K562 (cell line): ENCODE measurements at regions of chr17 and their contacts with region 1.

Region 1: DNA sequence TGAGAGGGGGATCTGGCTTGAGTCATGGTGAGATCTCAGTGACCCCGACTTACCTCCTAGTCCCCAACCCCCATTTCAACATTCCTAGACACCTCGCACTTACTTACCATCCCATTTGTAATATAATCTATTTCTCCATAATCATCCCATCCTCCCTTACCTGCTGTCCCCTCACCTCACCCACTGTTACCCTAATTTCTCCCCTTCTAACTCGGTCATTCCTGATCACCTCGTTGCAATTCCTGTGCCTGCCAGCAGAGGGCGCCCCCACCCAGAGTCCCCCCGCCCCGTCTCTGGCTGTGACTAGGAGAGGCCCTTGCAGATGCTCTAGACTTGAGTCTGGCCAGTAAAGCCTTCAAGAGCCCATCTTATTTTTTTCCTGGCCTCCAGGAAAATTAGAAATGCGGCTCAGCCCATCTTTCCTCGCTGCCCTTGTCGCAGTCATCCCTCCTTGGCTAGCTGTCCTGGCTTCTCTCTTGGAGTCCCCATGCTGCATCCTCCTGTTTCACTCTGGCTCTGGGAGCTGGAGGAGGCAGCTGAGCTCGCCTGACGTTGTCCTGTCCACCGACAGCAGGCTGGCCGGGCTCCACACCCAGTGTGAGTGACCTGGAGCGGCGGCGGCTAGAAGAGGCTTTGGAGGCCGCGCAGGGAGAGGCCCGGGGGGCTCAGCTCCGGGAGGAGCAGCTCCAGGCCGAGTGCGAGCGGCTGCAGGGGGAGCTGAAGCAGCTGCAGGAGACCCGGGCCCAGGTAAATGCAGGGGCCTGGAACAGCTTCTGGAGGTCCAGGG is 5.0 kb downstream of the TBKBP1 start:
- DNase-seq: peak; percentile 75 to 90 (median 86)
- ATAC-seq: peak; percentile 64
- H3K4me3 ChIP-seq: no peak overlapping the region
- H3K27ac ChIP-seq: no peak overlapping the region
- H3K4me1 ChIP-seq: peaks cover 15 to 55% of the 10 kb centered on the region in 2 experiments
- H3K27me3 ChIP-seq: no peaks in the 10 kb centered on the region
- CTCF ChIP-seq: peak; percentile 83 to 88 (median 87)
- EP300 ChIP-seq: no peak
- POLR2A ChIP-seq: no peak
- RAD21 ChIP-seq: peak; percentile 74 to 76

Region 2: GRCh38 chr17:47633996-47634395 is 64.9 kb before region 1 on chr17:
- CTCF ChIA-PET with region 1: no interaction called
- POLR2A ChIA-PET with region 1: no interaction called
- in situ Hi-C with region 1: no loop called
- intact Hi-C with region 1: no loop called
- DNase-seq: no peak
- ATAC-seq: no peak
- H3K4me3 ChIP-seq: no peak overlapping the region
- H3K27ac ChIP-seq: no peak overlapping the region
- H3K4me1 ChIP-seq: peaks cover 0 to 7% of the 10 kb centered on the region in 2 experiments; a peak in 3 of 5 replicates
- H3K27me3 ChIP-seq: no peaks in the 10 kb centered on the region
- CTCF ChIP-seq: no peak
- EP300 ChIP-seq: no peak
- POLR2A ChIP-seq: no peak
- RAD21 ChIP-seq: no peak

Region 3: GRCh38 chr17:47742319-47743181 is 43.6 kb after region 1 on chr17:
- CTCF ChIA-PET with region 1: interaction called, 6 read pairs
- POLR2A ChIA-PET with region 1: interaction called, 6 read pairs
- in situ Hi-C with region 1: no loop called
- intact Hi-C with region 1: loop called (anchors 1 kb)
- DNase-seq: peak; percentile 62 to 80 (median 78)
- ATAC-seq: peak; percentile 83
- H3K4me3 ChIP-seq: no peak overlapping the region
- H3K27ac ChIP-seq: no peak overlapping the region
- H3K4me1 ChIP-seq: peaks cover 13 to 15% of the 10 kb centered on the region in 2 experiments; a peak in 4 of 5 replicates
- H3K27me3 ChIP-seq: peaks cover 12 to 53% of the 10 kb centered on the region in 2 experiments; a peak in 4 of 5 replicates
- CTCF ChIP-seq: peak; percentile 62 to 76 (median 67)
- EP300 ChIP-seq: no peak
- POLR2A ChIP-seq: no peak
- RAD21 ChIP-seq: peak; percentile 57 to 84

Region 4: GRCh38 chr17:47802341-47803022 is 103.5 kb after region 1 on chr17:
- CTCF ChIA-PET with region 1: interaction called, 3 read pairs
- POLR2A ChIA-PET with region 1: no interaction called
- in situ Hi-C with region 1: no loop called
- intact Hi-C with region 1: loop called (anchors 5 kb)
- DNase-seq: peak; percentile 59 to 68 (median 63)
- ATAC-seq: peak; percentile 95
- H3K4me3 ChIP-seq: no peak overlapping the region
- H3K27ac ChIP-seq: no peak overlapping the region
- H3K4me1 ChIP-seq: peaks cover 0 to 6% of the 10 kb centered on the region in 2 experiments; a peak in 1 of 5 replicates
- H3K27me3 ChIP-seq: peaks cover 0 to 29% of the 10 kb centered on the region in 2 experiments; a peak in 3 of 5 replicates
- CTCF ChIP-seq: peak; percentile 71 to 81 (median 81)
- EP300 ChIP-seq: no peak
- POLR2A ChIP-seq: no peak
- RAD21 ChIP-seq: peak; percentile 40 to 64

Region 5: DNA sequence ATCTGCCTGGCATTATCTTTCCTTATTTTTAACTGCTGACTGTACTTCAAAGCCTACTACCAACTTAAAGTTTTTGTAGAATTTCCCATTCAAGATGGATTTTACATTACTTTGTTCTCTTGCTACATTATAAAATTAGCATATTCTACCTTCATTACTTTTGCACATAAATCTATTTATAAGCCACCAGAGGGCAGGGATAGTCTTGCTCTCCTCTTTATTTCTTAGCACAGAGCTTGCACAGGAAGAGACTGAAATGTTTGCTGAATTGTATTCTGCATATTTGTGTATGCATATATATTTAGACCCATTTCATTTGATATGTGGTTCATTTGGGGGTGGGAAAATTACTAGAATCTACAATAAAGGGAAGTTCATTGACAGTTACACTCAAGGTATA is 623.1 kb after region 1 on chr17:
- CTCF ChIA-PET with region 1: no interaction called
- POLR2A ChIA-PET with region 1: no interaction called
- in situ Hi-C with region 1: no loop called
- intact Hi-C with region 1: no loop called
- DNase-seq: no peak
- ATAC-seq: no peak
- H3K4me3 ChIP-seq: no peak overlapping the region
- H3K27ac ChIP-seq: no peak overlapping the region
- H3K4me1 ChIP-seq: no peaks in the 10 kb centered on the region
- H3K27me3 ChIP-seq: no peaks in the 10 kb centered on the region
- CTCF ChIP-seq: peak in 2 of 3 experiments; percentile 30 to 35; a peak in 3 of 6 replicates
- EP300 ChIP-seq: no peak
- POLR2A ChIP-seq: no peak
- RAD21 ChIP-seq: peak; percentile 15 to 53; a peak in 3 of 4 replicates